Activated T-helper 2 cell treated with anti-CD3 and anti-CD28 coated beads, Interferon-gamma antibody, Interleukin-2, Interleukin-4, amounts not matched to agents 10 μg/mL and 5 μg/mL and 100 μg/mL, durations not matched to agents 14 hours and 24 hours and 36 hours (primary cell): ENCODE measurements at regions of chr10 and their contacts with region 1.

Region 1: GRCh38 chr10:62610649-62611229 is 193.8 kb upstream of the ADO start:
- DNase-seq: peak; percentile 58
- H3K4me3 Mint-ChIP-seq: no peak overlapping the region
- H3K27ac Mint-ChIP-seq: no peak overlapping the region
- H3K4me1 Mint-ChIP-seq: peaks cover 52% of the 10 kb centered on the region
- H3K27me3 Mint-ChIP-seq: peaks cover 5% of the 10 kb centered on the region

Region 2: GRCh38 chr10:62194924-62195674 is 415.6 kb before region 1 on chr10:
- intact Hi-C with region 1: no loop called
- DNase-seq: no peak
- H3K4me3 Mint-ChIP-seq: no peak overlapping the region
- H3K27ac Mint-ChIP-seq: no peak overlapping the region
- H3K4me1 Mint-ChIP-seq: peaks cover 20% of the 10 kb centered on the region
- H3K27me3 Mint-ChIP-seq: no peaks in the 10 kb centered on the region

Region 3: GRCh38 chr10:62732841-62733653 is 122.3 kb after region 1 on chr10:
- intact Hi-C with region 1: loop called (anchors 1 kb)
- DNase-seq: peak; percentile 51
- H3K4me3 Mint-ChIP-seq: peak overlapping the region; percentile 56
- H3K27ac Mint-ChIP-seq: no peak overlapping the region
- H3K4me1 Mint-ChIP-seq: peaks cover 23% of the 10 kb centered on the region
- H3K27me3 Mint-ChIP-seq: no peaks in the 10 kb centered on the region

Region 4: DNA sequence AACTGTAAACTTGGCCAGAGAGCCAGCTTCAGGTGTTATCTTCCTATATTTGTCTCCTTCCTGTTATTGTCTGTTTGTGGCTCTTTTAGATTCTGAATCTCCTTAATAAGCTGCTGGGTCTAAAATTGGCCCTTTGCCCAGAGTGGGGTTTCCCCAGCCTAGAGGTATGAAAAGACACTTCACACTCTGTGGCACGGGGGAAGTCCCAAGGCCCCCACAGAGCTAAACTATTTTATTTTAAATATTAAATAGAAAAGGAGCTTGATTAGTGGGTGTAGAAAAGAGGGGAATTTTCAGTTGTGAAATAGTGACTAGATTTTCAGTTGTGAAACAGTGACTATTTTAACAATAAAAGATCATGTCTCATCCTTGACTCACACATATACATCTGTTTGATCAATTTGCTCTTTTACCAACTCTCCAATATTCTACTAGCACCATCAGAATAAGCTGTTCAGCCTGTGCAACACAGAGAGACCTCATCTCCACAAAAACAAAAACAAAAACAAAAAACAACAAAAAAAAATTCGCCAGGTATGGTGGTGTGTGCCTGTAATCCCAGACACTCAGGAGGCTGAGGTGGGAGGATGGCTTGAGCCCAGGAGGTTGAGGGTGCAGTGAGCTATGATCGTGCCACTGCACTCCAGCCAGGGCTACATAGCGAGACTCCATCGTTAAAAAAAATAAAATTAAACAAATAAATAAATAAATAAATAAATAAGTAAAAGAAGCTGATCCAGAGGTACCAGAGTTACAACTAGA is 168.9 kb after region 1 on chr10:
- intact Hi-C with region 1: loop called (anchors 1 kb)
- DNase-seq: peak; percentile 31
- H3K4me3 Mint-ChIP-seq: no peak overlapping the region
- H3K27ac Mint-ChIP-seq: peak overlapping the region; percentile 51
- H3K4me1 Mint-ChIP-seq: peaks cover 36% of the 10 kb centered on the region
- H3K27me3 Mint-ChIP-seq: peaks cover 9% of the 10 kb centered on the region

Region 5: DNA sequence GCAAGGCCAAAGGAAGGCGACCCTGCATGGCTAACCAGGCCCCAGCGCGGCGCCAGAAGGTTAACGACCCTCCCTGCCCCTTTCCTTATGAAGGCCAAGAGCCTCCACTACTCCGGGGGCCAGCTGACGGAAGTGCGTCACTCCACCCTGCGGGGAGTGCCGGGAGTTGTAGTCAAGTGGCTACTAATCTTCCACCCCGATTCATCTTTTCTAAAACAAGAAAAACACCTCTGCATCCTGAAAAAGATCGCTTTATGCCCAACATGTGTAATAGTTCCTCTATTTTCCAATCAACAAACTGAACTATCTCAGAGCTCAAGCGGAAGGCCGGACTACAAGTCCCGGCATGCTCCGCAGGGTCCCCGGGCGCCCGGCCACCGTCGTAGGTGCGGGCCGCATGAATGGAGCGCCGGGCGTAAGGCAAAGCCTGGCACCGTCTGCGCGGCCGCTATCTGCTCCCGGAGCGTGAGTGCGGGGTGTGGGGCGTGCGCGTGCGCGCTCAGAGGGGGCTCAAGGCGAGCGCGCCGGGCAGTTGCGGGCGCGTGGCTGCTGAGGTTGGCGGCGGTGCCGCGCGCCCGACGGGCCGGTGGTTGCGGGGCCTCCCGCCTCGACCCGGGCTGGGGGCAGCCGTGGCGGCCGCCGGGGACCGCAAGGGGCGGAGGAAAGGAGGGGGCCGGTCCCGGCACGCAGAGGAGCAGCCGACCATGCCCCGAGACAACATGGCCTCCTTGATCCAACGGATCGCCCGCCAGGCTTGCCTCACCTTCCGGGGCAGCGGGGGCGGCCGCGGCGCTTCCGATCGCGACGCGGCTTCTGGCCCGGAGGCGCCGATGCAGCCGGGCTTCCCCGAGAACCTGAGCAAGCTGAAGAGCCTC is 193.9 kb after region 1 on chr10 and contains the start of gene ADO:
- intact Hi-C with region 1: loop called (anchors 1 kb)
- DNase-seq: peak; percentile 67
- H3K4me3 Mint-ChIP-seq: peak within 1 kb of the TSS; percentile 94
- H3K27ac Mint-ChIP-seq: peak within 1 kb of the TSS; percentile 99
- H3K4me1 Mint-ChIP-seq: peaks cover 33% of the 10 kb centered on the region
- H3K27me3 Mint-ChIP-seq: peaks cover 13% of the 10 kb centered on the region
- total RNA-seq, gene ADO: 34.1 and 35.1 TPM in 2 replicates

Region 6: DNA sequence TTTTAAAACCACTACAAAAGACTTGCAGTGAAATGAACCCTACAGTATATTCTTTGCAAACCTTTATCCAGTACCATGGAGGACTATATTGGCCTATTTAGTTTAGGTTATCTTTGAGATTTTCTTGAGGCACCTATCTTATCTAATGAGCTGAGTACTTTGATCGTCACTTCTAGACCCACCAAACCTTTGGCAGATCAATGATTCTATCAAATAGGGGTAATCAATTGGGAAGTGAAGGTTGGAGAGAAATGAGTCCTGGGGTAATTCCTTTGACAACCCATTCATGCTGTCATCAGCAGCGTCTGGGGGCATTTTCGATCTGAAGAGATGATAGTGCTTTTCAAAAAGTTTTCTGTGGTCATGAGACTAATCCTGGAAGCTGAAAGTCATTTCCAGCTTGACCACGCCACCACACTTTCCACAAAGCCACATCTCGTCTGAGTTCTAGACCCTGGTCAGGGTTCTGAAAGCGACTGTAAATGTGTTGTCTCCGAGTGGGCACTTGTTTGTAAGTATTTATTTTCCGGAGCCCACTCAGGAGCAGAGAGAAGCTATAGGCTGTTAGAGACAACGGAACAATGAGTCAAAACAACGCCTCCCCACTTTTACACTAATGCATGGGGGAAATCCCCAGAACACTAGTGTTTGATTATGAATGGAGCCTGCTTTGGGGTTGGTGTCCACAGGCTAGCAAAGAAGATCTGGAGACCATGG is 200.6 kb after region 1 on chr10:
- intact Hi-C with region 1: loop called (anchors 1 kb)
- DNase-seq: peak; percentile 58
- H3K4me3 Mint-ChIP-seq: peak overlapping the region; percentile 97
- H3K27ac Mint-ChIP-seq: peak overlapping the region; percentile 83
- H3K4me1 Mint-ChIP-seq: peaks cover 67% of the 10 kb centered on the region
- H3K27me3 Mint-ChIP-seq: peaks cover 2% of the 10 kb centered on the region

Region 7: GRCh38 chr10:63083904-63084689 is 473.4 kb after region 1 on chr10:
- intact Hi-C with region 1: loop called (anchors 5 kb)
- DNase-seq: peak; percentile 16
- H3K4me3 Mint-ChIP-seq: no peak overlapping the region
- H3K27ac Mint-ChIP-seq: no peak overlapping the region
- H3K4me1 Mint-ChIP-seq: peaks cover 12% of the 10 kb centered on the region
- H3K27me3 Mint-ChIP-seq: peaks cover 23% of the 10 kb centered on the region

Region 8: GRCh38 chr10:63157845-63158624 is 547.3 kb after region 1 on chr10:
- intact Hi-C with region 1: loop called (anchors 5 kb)
- DNase-seq: peak; percentile 25
- H3K4me3 Mint-ChIP-seq: no peak overlapping the region
- H3K27ac Mint-ChIP-seq: no peak overlapping the region
- H3K4me1 Mint-ChIP-seq: peaks cover 27% of the 10 kb centered on the region
- H3K27me3 Mint-ChIP-seq: no peaks in the 10 kb centered on the region